Activated CD4-positive, alpha-beta T cell treated with anti-CD3 and anti-CD28 coated beads for 36 hours (primary cell): ENCODE measurements at regions of chr11 and their contacts with region 1.

Region 1: GRCh38 chr11:61061081-61061826 is 41.0 kb upstream of the CD5 start:
- DNase-seq: peak; percentile 93
- ATAC-seq: peak; percentile 79
- H3K4me3 Mint-ChIP-seq: peak overlapping the region; percentile 51
- H3K27ac Mint-ChIP-seq: peak overlapping the region; percentile 96
- H3K4me1 Mint-ChIP-seq: peaks cover 94% of the 10 kb centered on the region
- H3K27me3 Mint-ChIP-seq: no peaks in the 10 kb centered on the region

Region 2: GRCh38 chr11:60978546-60979380 is 82.5 kb before region 1 on chr11:
- CTCF ChIA-PET with region 1: interaction called, 4 read pairs
- POLR2A ChIA-PET with region 1: interaction called, 8 read pairs
- intact Hi-C with region 1: loop called in 1 of 2 experiments (anchors 2 kb)
- DNase-seq: peak; percentile 91
- ATAC-seq: peak; percentile 61
- H3K4me3 Mint-ChIP-seq: peak overlapping the region; percentile 87
- H3K27ac Mint-ChIP-seq: peak overlapping the region; percentile 95
- H3K4me1 Mint-ChIP-seq: peaks cover 74% of the 10 kb centered on the region
- H3K27me3 Mint-ChIP-seq: no peaks in the 10 kb centered on the region

Region 3: DNA sequence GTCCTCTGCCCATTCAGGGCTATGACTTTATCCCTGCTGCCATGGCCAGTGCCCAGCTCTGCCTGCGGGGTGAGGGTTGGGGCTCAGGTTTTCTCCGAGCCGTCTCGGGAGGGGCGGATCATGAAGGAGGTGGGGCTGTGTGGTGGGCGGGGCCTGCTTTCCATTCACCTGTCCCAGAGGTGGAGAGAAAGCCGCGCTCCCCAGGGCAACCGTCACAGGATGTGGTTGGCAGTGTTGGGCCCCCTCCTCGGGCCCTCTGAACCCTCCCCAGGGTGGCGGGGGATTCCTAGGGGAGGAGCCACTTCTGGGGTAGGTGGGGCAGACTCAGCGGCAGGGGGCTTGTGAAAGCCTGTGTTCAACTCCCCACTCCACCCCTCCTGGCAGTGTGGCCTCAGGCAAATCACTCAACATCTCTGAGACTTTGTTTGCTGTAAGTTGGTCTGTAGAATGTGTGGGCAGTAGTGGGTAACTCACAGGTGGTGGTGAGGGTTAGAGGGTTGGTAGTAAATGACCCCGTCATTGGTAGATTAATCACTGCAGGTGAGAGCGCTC is 39.5 kb before region 1 on chr11:
- CTCF ChIA-PET with region 1: interaction called, 5 read pairs
- POLR2A ChIA-PET with region 1: interaction called, 19 read pairs
- intact Hi-C with region 1: loop called (anchors 1 kb)
- DNase-seq: peak; percentile 94
- ATAC-seq: peak; percentile 50
- H3K4me3 Mint-ChIP-seq: peak overlapping the region; percentile 79
- H3K27ac Mint-ChIP-seq: peak overlapping the region; percentile 97
- H3K4me1 Mint-ChIP-seq: peaks cover 92% of the 10 kb centered on the region
- H3K27me3 Mint-ChIP-seq: no peaks in the 10 kb centered on the region

Region 4: DNA sequence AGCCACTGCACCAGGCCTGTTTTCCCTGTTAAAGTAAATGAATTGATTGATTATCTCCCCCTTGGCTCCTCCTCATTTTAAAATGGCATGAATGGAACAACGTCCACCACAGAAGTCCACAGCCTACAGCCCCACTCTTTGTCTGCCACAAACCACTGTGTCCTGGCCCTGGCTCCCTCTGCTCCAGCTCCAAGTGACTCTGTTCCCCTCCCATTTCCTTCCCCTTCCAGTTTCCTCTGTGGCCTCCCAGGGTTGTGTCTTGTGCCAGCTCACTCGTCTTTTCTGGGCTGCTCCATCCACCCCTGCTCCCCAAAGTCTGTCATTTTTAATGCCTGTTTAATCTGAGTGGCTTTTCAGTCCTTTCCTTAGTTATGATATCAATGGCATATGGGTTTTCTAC is 11.4 kb before region 1 on chr11:
- CTCF ChIA-PET with region 1: interaction called, 5 read pairs
- POLR2A ChIA-PET with region 1: interaction called, 14 read pairs
- intact Hi-C with region 1: no loop called
- DNase-seq: peak; percentile 4
- ATAC-seq: no peak
- H3K4me3 Mint-ChIP-seq: peak overlapping the region; percentile 46
- H3K27ac Mint-ChIP-seq: peak overlapping the region; percentile 86
- H3K4me1 Mint-ChIP-seq: peaks cover 80% of the 10 kb centered on the region
- H3K27me3 Mint-ChIP-seq: no peaks in the 10 kb centered on the region

Region 5: DNA sequence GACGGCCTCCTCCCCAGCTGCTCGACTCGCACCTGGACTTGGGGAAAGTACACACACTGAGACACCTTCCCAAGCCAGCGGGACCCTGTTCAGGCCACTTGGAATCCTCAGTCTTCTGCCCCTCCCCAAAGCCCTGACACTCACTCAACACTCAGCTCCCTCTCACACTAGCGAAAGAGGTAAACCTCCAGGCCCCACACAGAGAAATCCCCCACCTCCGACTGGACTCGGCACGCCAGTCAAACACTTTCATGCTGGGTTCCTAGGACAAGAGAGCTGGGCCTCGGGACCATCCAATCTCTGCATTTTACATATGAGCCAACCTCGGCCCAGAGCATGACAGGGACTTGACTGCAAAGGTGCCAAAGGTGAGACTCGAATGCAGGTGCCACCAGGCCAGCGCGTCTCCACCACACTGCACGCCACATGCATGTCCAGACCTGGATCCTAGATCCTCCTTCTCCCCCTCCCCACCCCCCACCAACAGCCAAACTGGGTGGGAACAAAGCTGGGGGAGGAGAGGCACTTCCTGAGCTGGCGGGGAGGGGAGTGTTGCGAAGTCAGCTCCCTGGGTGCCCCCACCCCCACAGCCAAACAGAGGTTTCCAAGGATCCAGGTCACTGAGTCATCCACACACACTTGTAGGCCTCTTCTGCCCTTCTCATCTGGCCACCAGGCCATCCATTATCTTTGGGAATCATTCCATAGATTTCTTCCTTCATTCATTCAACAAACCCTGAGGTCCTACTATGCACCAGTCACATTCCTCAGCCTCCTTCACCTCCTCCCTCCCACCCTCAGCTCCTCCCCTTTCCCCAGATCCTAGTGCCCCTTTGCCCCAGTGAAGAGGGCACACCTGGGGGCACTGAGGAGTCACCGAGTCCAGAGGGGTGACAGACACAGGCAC is 30.4 kb after region 1 on chr11:
- CTCF ChIA-PET with region 1: interaction called, 4 read pairs
- POLR2A ChIA-PET with region 1: interaction called, 23 read pairs
- intact Hi-C with region 1: loop called in 1 of 2 experiments (anchors 1 kb)
- DNase-seq: peak; percentile 84
- ATAC-seq: peak; percentile 71
- H3K4me3 Mint-ChIP-seq: peak overlapping the region; percentile 91
- H3K27ac Mint-ChIP-seq: peak overlapping the region; percentile 98
- H3K4me1 Mint-ChIP-seq: peaks cover 63% of the 10 kb centered on the region
- H3K27me3 Mint-ChIP-seq: no peaks in the 10 kb centered on the region

Region 6: GRCh38 chr11:61129639-61130523 is 68.6 kb after region 1 on chr11:
- CTCF ChIA-PET with region 1: interaction called, 3 read pairs
- POLR2A ChIA-PET with region 1: no interaction called
- intact Hi-C with region 1: loop called in 1 of 2 experiments (anchors 1 kb)
- DNase-seq: peak; percentile 97
- ATAC-seq: peak; percentile 89
- H3K4me3 Mint-ChIP-seq: peak overlapping the region; percentile 14
- H3K27ac Mint-ChIP-seq: peak overlapping the region; percentile 64
- H3K4me1 Mint-ChIP-seq: peaks cover 27% of the 10 kb centered on the region
- H3K27me3 Mint-ChIP-seq: no peaks in the 10 kb centered on the region

Region 7: GRCh38 chr11:61616434-61616833 is 555.2 kb after region 1 on chr11:
- CTCF ChIA-PET with region 1: no interaction called
- POLR2A ChIA-PET with region 1: no interaction called
- intact Hi-C with region 1: no loop called
- DNase-seq: no peak
- ATAC-seq: no peak
- H3K4me3 Mint-ChIP-seq: no peak overlapping the region
- H3K27ac Mint-ChIP-seq: no peak overlapping the region
- H3K4me1 Mint-ChIP-seq: peaks cover 4% of the 10 kb centered on the region
- H3K27me3 Mint-ChIP-seq: peaks cover 15% of the 10 kb centered on the region